WTC11 (cell line): ENCODE measurements at regions of chr1 and their contacts with region 1.

Region 1: GRCh38 chr1:155978325-155978972 is at the start of gene ARHGEF2:
- DNase-seq: peak; percentile 91
- ATAC-seq: peak; percentile 75
- H3K4me3 Mint-ChIP-seq: peak within 1 kb of the TSS; percentile 95
- H3K27ac Mint-ChIP-seq: peak within 1 kb of the TSS; percentile 95
- H3K4me1 Mint-ChIP-seq: peaks cover 78% of the 10 kb centered on the region
- H3K27me3 Mint-ChIP-seq: no peaks in the 10 kb centered on the region
- CTCF ChIP-seq: no peak
- total RNA-seq, gene ARHGEF2: 60.0 to 69.5 TPM (median 66.2 TPM) in 3 replicates

Region 2: GRCh38 chr1:155794605-155795245 is 183.7 kb before region 1 on chr1:
- CTCF ChIA-PET with region 1: no interaction called
- POLR2A ChIA-PET with region 1: no interaction called
- DNase-seq: no peak
- ATAC-seq: no peak
- H3K4me3 Mint-ChIP-seq: no peak overlapping the region
- H3K27ac Mint-ChIP-seq: no peak overlapping the region
- H3K4me1 Mint-ChIP-seq: no peaks in the 10 kb centered on the region
- H3K27me3 Mint-ChIP-seq: no peaks in the 10 kb centered on the region
- CTCF ChIP-seq: no peak

Region 3: DNA sequence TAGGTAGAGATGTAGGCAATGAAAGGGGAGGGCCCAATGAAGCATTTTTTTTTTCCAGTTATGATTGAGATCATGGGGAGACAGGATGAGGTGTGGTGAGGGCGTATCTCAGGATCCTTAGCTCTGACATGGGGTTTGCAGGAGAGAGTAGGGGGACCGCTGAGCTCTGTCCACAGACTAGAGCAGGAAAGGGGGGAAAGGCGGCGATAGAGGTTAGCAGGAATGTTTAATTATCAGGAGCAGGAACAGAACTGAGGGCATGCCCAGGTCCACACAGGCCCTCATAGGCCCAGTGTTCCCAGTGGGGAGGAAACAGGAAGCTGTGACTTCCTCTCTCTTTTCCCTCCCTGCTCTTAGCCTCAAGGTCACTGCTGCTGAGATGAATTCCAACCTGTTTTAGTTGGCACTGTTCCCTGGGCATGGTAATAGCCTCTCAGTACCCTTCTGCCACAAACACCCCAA is 37.9 kb before region 1 on chr1:
- CTCF ChIA-PET with region 1: interaction called, 31 read pairs
- POLR2A ChIA-PET with region 1: interaction called, 4 read pairs
- DNase-seq: no peak
- ATAC-seq: peak; percentile 10; the same call in 1 of the 2 replicates
- H3K4me3 Mint-ChIP-seq: no peak overlapping the region
- H3K27ac Mint-ChIP-seq: peak overlapping the region; percentile 18; the same call in 1 of the 2 replicates
- H3K4me1 Mint-ChIP-seq: peaks cover 25% of the 10 kb centered on the region
- H3K27me3 Mint-ChIP-seq: no peaks in the 10 kb centered on the region
- CTCF ChIP-seq: no peak

Region 4: DNA sequence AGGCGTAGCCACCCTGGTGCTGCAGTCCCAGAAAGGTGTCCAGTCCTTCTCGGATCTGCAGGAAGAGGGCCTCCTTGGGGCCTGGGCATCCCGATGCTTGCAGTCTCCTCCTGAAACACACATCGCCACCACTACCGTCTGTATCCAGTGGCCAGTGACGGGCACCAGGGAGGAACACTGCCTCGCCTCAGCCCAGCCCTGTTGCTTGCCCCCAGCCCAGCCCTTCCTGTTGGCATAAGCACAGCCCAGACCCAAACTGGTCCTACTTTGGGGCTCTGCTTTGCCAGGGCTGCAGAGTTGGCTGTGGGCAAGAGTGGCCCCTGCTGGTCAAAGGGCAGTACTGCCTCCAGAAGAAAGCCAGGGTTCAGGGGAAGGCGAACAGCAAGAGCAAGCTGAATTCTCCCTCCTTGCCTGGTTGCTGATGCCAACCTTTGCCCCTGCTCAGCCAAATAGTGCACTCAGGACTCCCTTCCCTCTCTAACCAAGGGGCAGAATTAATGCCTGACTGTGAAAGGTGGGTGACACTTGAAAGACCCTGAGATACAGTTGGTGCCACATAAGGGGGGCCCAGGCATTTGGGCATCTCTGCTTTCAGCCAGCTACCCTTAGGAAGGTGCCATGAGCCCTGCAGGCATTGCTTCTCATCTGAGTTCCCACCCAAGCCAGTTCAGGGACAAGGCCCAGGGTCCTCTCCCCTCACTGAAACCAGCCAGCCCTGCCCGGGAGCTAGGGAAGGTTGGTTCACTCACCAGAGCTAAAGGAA is 11.0 kb after region 1 on chr1:
- CTCF ChIA-PET with region 1: interaction called, 122 read pairs
- POLR2A ChIA-PET with region 1: interaction called, 25 read pairs
- DNase-seq: peak; percentile 82
- ATAC-seq: peak; percentile 84
- H3K4me3 Mint-ChIP-seq: no peak overlapping the region
- H3K27ac Mint-ChIP-seq: no peak overlapping the region
- H3K4me1 Mint-ChIP-seq: peaks cover 27% of the 10 kb centered on the region
- H3K27me3 Mint-ChIP-seq: no peaks in the 10 kb centered on the region; the same call in 1 of the 2 replicates
- CTCF ChIP-seq: peak; percentile 99

Region 5: GRCh38 chr1:156025877-156026276 is 47.4 kb after region 1 on chr1:
- CTCF ChIA-PET with region 1: interaction called, 11 read pairs
- POLR2A ChIA-PET with region 1: no interaction called
- DNase-seq: peak; percentile 72
- ATAC-seq: peak; percentile 99
- H3K4me3 Mint-ChIP-seq: no peak overlapping the region
- H3K27ac Mint-ChIP-seq: no peak overlapping the region
- H3K4me1 Mint-ChIP-seq: peaks cover 5% of the 10 kb centered on the region
- H3K27me3 Mint-ChIP-seq: peaks cover 28% of the 10 kb centered on the region
- CTCF ChIP-seq: no peak

Region 6: GRCh38 chr1:156076501-156077429 is 98.3 kb after region 1 on chr1:
- CTCF ChIA-PET with region 1: interaction called, 20 read pairs
- POLR2A ChIA-PET with region 1: interaction called, 6 read pairs
- DNase-seq: peak; percentile 65
- ATAC-seq: peak; percentile 21
- H3K4me3 Mint-ChIP-seq: peak overlapping the region; percentile 96
- H3K27ac Mint-ChIP-seq: peak overlapping the region; percentile 53
- H3K4me1 Mint-ChIP-seq: peaks cover 80% of the 10 kb centered on the region
- H3K27me3 Mint-ChIP-seq: no peaks in the 10 kb centered on the region
- CTCF ChIP-seq: no peak

Region 7: DNA sequence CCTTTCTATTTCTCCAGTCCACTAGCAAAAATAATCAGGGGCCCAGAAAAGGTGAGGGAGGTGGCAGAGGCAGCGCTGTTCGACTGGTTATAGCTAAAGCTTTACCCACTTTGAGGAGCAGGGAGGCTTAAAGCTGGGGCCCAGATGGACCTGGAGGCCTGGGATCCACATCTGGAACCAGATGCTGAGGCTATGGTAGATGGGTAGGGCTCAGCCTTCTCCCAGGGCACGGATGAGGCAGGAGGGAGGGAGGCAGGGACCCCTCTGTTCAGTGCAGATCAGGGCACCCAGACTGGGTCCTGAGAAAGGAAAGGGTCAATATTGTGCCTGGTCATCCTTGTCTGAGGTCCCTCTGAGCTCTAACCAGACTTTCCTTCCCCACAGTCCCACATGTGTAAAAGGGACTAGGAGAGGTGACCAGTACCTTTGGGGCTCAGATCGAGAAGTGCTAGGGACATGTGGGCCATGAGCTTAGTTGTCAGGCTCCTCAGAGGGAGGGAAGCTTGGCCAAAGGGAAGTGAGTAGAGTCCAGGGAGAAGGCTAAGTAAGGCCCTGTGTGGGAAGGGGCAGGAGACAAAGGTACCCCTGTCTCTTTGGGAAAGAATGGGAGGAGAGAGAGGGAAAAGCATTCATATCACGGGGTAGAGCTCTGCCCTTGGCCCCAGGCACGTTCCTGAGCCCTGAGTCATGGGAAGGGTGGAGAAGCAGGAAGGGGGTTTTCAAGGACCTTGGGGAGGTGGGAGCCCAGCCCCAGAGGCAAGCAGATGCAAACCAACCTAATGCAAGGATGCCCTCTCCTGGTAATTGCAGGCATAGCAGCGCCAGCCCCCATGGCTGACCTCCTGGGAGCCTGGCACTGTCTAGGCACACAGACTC is 151.5 kb after region 1 on chr1:
- CTCF ChIA-PET with region 1: interaction called, 12 read pairs
- POLR2A ChIA-PET with region 1: interaction called, 3 read pairs
- DNase-seq: peak; percentile 94
- ATAC-seq: peak; percentile 92
- H3K4me3 Mint-ChIP-seq: no peak overlapping the region
- H3K27ac Mint-ChIP-seq: peak overlapping the region; percentile 96
- H3K4me1 Mint-ChIP-seq: peaks cover 29% of the 10 kb centered on the region
- H3K27me3 Mint-ChIP-seq: no peaks in the 10 kb centered on the region; the same call in 1 of the 2 replicates
- CTCF ChIP-seq: peak; percentile 93